PC-9 (cell line): ENCODE measurements at regions of chr2 and their contacts with region 1.

Region 1: DNA sequence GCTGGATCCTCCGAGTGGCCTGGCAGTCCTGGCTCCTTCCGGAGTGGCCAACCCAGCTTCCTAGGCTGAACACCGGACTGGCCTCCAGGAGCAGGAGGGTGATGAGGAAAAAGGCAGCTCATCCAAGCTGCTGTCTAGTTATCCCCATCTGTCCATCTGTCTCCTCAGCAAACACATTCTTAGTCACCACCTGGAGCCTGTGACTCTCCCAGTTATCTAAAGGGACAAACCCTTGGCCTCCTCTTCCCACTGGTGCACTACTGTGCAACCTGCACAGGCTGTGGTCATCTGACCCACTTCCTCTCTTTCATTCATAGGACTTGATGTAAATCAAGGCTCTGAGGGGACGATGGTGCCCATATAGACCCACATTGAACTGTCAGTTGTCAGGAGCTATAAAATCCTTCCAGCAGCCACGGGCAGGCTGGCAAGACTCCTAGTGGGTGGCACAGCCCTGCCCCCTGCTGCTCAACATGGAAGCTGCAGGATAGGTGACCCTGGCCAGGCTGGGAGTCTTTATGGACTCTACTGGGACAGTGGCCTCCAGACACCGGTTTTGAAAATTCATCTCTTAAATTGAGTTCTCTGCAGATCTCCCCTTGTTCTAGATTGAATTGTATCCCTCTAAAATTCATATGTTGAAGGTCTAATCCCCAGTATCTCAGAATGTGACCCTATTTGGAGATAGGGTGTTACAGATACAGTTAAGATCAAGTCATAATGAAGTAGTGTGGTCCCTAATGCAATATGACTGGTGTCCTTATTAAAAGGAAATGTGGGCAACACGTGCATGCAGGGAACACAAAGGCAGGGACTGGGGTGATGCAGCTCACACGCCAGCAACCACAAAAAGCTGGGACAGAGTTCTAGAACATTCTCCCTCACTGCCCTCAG is 29.3 kb upstream of the DUSP2 start:
- DNase-seq: peak; percentile 55 to 82
- H3K4me3 ChIP-seq: no peak overlapping the region
- H3K27ac ChIP-seq: no peak overlapping the region
- H3K4me1 ChIP-seq: no peaks in the 10 kb centered on the region
- H3K27me3 ChIP-seq: no peaks in the 10 kb centered on the region
- CTCF ChIP-seq: peak; percentile 98

Region 2: GRCh38 chr2:95015261-95015912 is 1159.1 kb before region 1 on chr2:
- CTCF ChIA-PET with region 1: interaction called, 10 read pairs
- POLR2A ChIA-PET with region 1: no interaction called
- intact Hi-C with region 1: no loop called
- DNase-seq: no peak
- H3K4me3 ChIP-seq: no peak overlapping the region
- H3K27ac ChIP-seq: no peak overlapping the region
- H3K4me1 ChIP-seq: peaks cover 32% of the 10 kb centered on the region
- H3K27me3 ChIP-seq: no peaks in the 10 kb centered on the region
- CTCF ChIP-seq: no peak

Region 3: GRCh38 chr2:96091533-96092334 is 82.8 kb before region 1 on chr2:
- CTCF ChIA-PET with region 1: interaction called, 3 read pairs
- POLR2A ChIA-PET with region 1: no interaction called
- intact Hi-C with region 1: loop called (anchors 2 kb)
- DNase-seq: peak in 1 of 2 experiments; percentile 32
- H3K4me3 ChIP-seq: no peak overlapping the region
- H3K27ac ChIP-seq: no peak overlapping the region
- H3K4me1 ChIP-seq: peaks cover 9% of the 10 kb centered on the region
- H3K27me3 ChIP-seq: peaks cover 5% of the 10 kb centered on the region; the same call in 1 of the 2 replicates
- CTCF ChIP-seq: no peak

Region 4: GRCh38 chr2:96116879-96117697 is 57.4 kb before region 1 on chr2:
- CTCF ChIA-PET with region 1: interaction called, 4 read pairs
- POLR2A ChIA-PET with region 1: no interaction called
- intact Hi-C with region 1: loop called (anchors 1 kb)
- DNase-seq: peak in 1 of 2 experiments; percentile 74
- H3K4me3 ChIP-seq: peak overlapping the region; percentile 55; the same call in 1 of the 2 replicates
- H3K27ac ChIP-seq: no peak overlapping the region
- H3K4me1 ChIP-seq: peaks cover 5% of the 10 kb centered on the region; the same call in 1 of the 2 replicates
- H3K27me3 ChIP-seq: peaks cover 58% of the 10 kb centered on the region
- CTCF ChIP-seq: peak; percentile 62

Region 5: DNA sequence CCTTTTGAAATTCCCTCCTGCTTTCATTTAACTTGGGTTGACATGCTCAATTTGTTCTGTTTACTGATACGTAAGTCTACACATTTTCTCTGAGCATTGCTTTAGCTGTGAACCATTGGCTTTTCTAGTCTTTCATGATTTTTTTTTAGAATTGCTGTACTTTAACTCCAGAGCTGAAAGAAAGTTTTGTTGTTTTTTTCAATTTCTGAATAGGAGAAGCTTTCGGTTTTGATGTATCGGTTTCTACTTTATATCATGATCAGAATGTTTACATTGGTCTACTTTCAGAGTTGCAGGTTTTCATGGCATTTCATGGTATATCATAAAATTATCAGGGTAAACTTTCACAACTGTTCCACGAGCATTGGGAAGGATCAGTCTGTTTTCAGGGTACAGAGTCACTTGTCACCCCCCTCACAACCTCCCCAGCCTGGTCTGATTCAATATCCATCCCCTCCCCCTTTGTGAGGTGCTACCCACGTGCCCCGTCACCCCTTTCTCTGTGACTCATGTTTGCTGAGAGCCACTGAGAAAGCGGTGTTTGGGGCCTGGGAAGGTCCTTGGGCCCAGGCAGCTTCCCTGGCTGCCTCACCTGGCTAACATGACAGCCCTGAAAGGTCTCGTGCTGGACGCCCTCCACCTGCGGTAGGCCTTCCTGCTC is 43.2 kb before region 1 on chr2:
- CTCF ChIA-PET with region 1: interaction called, 3 read pairs
- POLR2A ChIA-PET with region 1: interaction called, 10 read pairs
- intact Hi-C with region 1: no loop called
- DNase-seq: no peak
- H3K4me3 ChIP-seq: no peak overlapping the region
- H3K27ac ChIP-seq: no peak overlapping the region
- H3K4me1 ChIP-seq: no peaks in the 10 kb centered on the region
- H3K27me3 ChIP-seq: peaks cover 2% of the 10 kb centered on the region
- CTCF ChIP-seq: no peak

Region 6: GRCh38 chr2:96138179-96139145 is 36.0 kb before region 1 on chr2 and contains the start of gene ASTL:
- CTCF ChIA-PET with region 1: interaction called, 28 read pairs
- POLR2A ChIA-PET with region 1: no interaction called
- intact Hi-C with region 1: loop called (anchors 1 kb)
- DNase-seq: peak; percentile 80 to 89
- H3K4me3 ChIP-seq: peak within 1 kb of the TSS; percentile 22; the same call in 1 of the 2 replicates
- H3K27ac ChIP-seq: no peak within 1 kb of the TSS
- H3K4me1 ChIP-seq: peaks cover 9% of the 10 kb centered on the region
- H3K27me3 ChIP-seq: no peaks in the 10 kb centered on the region
- CTCF ChIP-seq: peak; percentile 71
- total RNA-seq, gene ASTL: not detected in 2 replicates

Region 7: GRCh38 chr2:96156926-96157650 is 17.4 kb before region 1 on chr2:
- CTCF ChIA-PET with region 1: no interaction called
- POLR2A ChIA-PET with region 1: no interaction called
- intact Hi-C with region 1: no loop called
- DNase-seq: no peak
- H3K4me3 ChIP-seq: no peak overlapping the region
- H3K27ac ChIP-seq: no peak overlapping the region
- H3K4me1 ChIP-seq: no peaks in the 10 kb centered on the region
- H3K27me3 ChIP-seq: peaks cover 24% of the 10 kb centered on the region; the same call in 1 of the 2 replicates
- CTCF ChIP-seq: no peak

Region 8: DNA sequence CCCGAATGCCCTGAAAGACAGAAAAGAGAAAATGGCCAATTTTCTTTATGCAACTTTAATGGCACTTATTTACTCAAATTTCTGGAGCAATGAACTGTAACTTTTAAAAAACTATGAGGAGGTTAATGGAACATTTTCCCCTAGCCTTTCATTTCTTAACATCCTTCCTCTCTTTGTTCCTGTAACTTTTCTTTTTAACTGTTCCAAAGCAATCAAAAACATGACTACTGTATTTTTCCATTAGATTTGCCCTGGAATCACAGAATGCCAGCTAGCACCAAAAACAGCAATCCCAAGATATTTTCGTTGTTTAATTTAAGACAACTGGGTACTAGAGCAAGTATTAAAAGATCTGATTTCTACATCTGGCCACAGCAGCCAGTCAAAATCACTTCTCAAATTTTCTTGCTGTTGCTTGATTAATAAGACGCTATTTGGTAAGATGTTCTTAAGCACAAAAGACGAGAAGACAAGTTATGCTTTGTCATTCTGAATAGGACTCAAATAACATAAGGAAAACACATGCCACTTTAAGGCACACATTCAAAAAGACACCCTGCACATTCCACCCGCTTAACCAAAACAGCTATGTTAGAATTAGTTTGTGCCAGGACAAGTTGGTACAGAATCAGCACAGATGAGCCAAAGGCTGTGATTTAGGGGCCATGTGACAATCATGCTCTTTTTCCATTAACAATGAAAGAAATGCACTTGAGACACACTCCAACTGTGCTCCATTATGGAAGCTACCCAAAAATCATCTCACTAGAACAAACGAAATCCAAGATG is 30.5 kb after region 1 on chr2:
- CTCF ChIA-PET with region 1: no interaction called
- POLR2A ChIA-PET with region 1: no interaction called
- intact Hi-C with region 1: no loop called
- DNase-seq: peak in 1 of 2 experiments; percentile 40
- H3K4me3 ChIP-seq: peak overlapping the region; percentile 38; the same call in 1 of the 2 replicates
- H3K27ac ChIP-seq: peak overlapping the region; percentile 2; the same call in 1 of the 2 replicates
- H3K4me1 ChIP-seq: peaks cover 34% of the 10 kb centered on the region
- H3K27me3 ChIP-seq: no peaks in the 10 kb centered on the region
- CTCF ChIP-seq: no peak

Region 9: GRCh38 chr2:96832754-96833507 is 658.4 kb after region 1 on chr2:
- CTCF ChIA-PET with region 1: interaction called, 11 read pairs
- POLR2A ChIA-PET with region 1: no interaction called
- intact Hi-C with region 1: no loop called
- DNase-seq: peak; percentile 90 to 94
- H3K4me3 ChIP-seq: peak overlapping the region; percentile 30; the same call in 1 of the 2 replicates
- H3K27ac ChIP-seq: peak overlapping the region; percentile 86
- H3K4me1 ChIP-seq: peaks cover 25% of the 10 kb centered on the region
- H3K27me3 ChIP-seq: no peaks in the 10 kb centered on the region
- CTCF ChIP-seq: no peak